GM12878 (cell line): ENCODE measurements at regions of chr10 and their contacts with region 1.

Region 1: DNA sequence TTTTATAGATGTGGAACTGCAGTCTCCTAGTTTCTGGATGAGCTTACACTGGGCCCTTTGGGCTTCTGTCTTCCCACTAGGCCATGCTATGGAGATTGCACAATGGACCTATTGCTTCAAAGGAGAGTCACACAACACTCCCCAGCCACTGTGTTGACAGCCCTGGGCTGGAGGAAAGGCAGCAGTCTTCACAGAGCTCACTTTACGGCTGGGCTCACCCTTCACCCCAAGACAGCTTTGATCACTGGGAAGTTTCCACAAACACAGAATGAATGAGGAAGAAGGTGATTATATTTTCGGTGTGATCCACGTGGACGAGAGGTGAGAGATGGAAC is 92.7 kb upstream of the GDF10 start:
- DNase-seq: no peak
- ATAC-seq: no peak
- H3K4me3 ChIP-seq: no peak overlapping the region
- H3K27ac ChIP-seq: no peak overlapping the region
- H3K4me1 ChIP-seq: no peaks in the 10 kb centered on the region
- H3K27me3 ChIP-seq: no peaks in the 10 kb centered on the region
- CTCF ChIP-seq: no peak
- EP300 ChIP-seq: no peak
- POLR2A ChIP-seq: no peak
- RAD21 ChIP-seq: no peak

Region 2: GRCh38 chr10:47243791-47244190 is 36.5 kb after region 1 on chr10:
- CTCF ChIA-PET with region 1: no interaction called
- POLR2A ChIA-PET with region 1: no interaction called
- RAD21 ChIA-PET with region 1: no interaction called
- SMC1A ChIA-PET with region 1: no interaction called
- in situ Hi-C with region 1: no loop called
- intact Hi-C with region 1: no loop called
- DNase-seq: no peak
- ATAC-seq: no peak
- H3K4me3 ChIP-seq: no peak overlapping the region
- H3K27ac ChIP-seq: no peak overlapping the region
- H3K4me1 ChIP-seq: no peaks in the 10 kb centered on the region
- H3K27me3 ChIP-seq: no peaks in the 10 kb centered on the region; a peak in 2 of 4 replicates
- CTCF ChIP-seq: no peak
- EP300 ChIP-seq: no peak
- POLR2A ChIP-seq: no peak
- RAD21 ChIP-seq: no peak

Region 3: GRCh38 chr10:47261121-47261520 is 53.9 kb after region 1 on chr10:
- CTCF ChIA-PET with region 1: no interaction called
- POLR2A ChIA-PET with region 1: no interaction called
- RAD21 ChIA-PET with region 1: interaction called, 9 read pairs
- SMC1A ChIA-PET with region 1: interaction called, 13 read pairs
- in situ Hi-C with region 1: no loop called
- intact Hi-C with region 1: no loop called
- DNase-seq: peak; percentile 82
- ATAC-seq: peak; percentile 95
- H3K4me3 ChIP-seq: no peak overlapping the region
- H3K27ac ChIP-seq: no peak overlapping the region
- H3K4me1 ChIP-seq: peaks cover 21% of the 10 kb centered on the region
- H3K27me3 ChIP-seq: no peaks in the 10 kb centered on the region
- CTCF ChIP-seq: no peak
- EP300 ChIP-seq: peak in 1 of 2 experiments; percentile 46; a peak in 1 of 4 replicates
- POLR2A ChIP-seq: no peak
- RAD21 ChIP-seq: no peak

Region 4: DNA sequence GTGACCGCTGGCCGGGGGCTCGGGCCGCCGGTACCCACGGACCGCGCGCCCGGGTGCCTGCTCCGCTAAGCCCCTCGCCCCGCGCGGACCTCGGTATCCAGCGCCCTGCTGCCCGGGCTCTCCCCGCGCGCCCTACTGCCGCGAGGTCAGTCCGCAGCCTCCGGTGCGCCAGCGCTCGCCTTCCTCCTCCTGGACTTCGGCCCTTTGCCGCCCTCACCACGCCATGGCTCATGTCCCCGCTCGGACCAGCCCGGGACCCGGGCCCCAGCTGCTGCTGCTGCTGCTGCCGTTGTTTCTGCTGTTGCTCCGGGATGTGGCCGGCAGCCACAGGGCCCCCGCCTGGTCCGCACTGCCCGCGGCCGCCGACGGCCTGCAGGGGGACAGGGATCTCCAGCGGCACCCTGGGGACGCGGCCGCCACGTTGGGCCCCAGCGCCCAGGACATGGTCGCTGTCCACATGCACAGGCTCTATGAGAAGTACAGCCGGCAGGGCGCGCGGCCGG is 93.2 kb after region 1 on chr10:
- CTCF ChIA-PET with region 1: no interaction called
- POLR2A ChIA-PET with region 1: no interaction called
- RAD21 ChIA-PET with region 1: no interaction called
- SMC1A ChIA-PET with region 1: no interaction called
- in situ Hi-C with region 1: no loop called
- intact Hi-C with region 1: no loop called
- DNase-seq: no peak
- ATAC-seq: no peak
- H3K4me3 ChIP-seq: no peak overlapping the region
- H3K27ac ChIP-seq: no peak overlapping the region
- H3K4me1 ChIP-seq: no peaks in the 10 kb centered on the region
- H3K27me3 ChIP-seq: peaks cover 3 to 9% of the 10 kb centered on the region in 2 experiments; a peak in 3 of 4 replicates
- CTCF ChIP-seq: no peak
- EP300 ChIP-seq: no peak
- POLR2A ChIP-seq: no peak
- RAD21 ChIP-seq: no peak